ENCODE measurements at regions of chr3 and their contacts with region 1.

Region 1: DNA sequence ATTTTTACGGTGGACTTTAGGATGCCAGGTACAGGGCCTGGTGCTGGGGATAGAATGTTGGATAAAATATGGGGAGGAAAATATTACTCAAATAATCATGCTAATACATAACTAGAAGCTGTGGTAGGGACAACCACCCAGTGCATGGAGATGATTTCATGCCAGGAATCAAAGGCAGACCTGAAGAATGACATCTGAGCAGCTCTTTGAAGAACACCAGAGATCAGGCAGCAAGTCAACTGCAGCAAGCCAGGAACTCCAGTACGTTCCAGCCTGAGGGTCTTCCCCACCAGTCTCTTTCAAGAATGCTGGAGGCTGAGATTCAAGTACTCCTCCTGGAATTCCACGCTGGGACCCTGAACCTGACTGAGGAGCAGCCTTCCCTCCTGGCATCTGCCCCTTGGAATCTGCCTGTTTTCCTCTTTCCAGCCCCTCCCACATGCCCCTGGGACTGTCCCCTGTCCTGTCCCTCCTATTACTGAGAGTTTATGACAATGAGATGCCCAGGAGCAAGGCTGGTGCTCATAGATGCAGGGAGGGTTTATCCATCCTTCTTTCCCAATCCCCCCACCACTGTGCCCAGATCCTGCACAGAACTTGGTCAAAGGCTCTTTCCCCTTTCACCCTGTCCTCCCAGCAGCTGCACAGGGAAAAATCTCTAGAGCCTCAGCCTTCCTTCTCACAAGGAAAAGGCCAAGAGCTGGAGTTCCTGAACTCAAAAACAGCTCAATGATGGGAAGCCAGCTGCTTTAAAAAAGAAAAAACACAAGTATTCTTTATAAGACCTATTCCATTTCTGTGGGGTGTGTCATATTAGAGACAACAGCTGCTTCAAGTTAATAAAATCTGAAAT is 68.0 kb downstream of the PDZRN3 start:
- DNase-seq: no peak
- ATAC-seq: peak; percentile 37

Region 2: GRCh38 chr3:73516631-73517030 is 40.1 kb before region 1 on chr3:
- intact Hi-C with region 1: loop called (anchors 5 kb)
- DNase-seq: no peak
- ATAC-seq: peak; percentile 37

Region 3: GRCh38 chr3:73540969-73541740 is 15.6 kb before region 1 on chr3:
- intact Hi-C with region 1: no loop called
- DNase-seq: no peak
- ATAC-seq: no peak

Region 4: GRCh38 chr3:73695841-73696240 is 139.1 kb after region 1 on chr3:
- intact Hi-C with region 1: no loop called
- DNase-seq: no peak
- ATAC-seq: no peak

Measured in Right ventricle myocardium inferior (tissue), 1 donor.